ENCODE measurements at regions of chr3 and their contacts with region 1.

Region 1: GRCh38 chr3:16511681-16512434 is 1.6 kb downstream of the RFTN1 start:
- DNase-seq: peak; percentile 38 to 73
- ATAC-seq: peak; percentile 51 to 75 (median 56)
- H3K4me3 ChIP-seq: peak overlapping the region; percentile 57 to 96 (median 86)
- H3K27ac ChIP-seq: peak overlapping the region; percentile 86 to 96 (median 93)
- H3K4me1 ChIP-seq: peaks cover 8 to 90% (median 74%) of the 10 kb centered on the region in 9 donors
- H3K27me3 ChIP-seq: no peaks in the 10 kb centered on the region
- CTCF ChIP-seq: peak in 1 of 9 donors; percentile 15

Region 2: GRCh38 chr3:16290007-16290826 is 221.6 kb before region 1 on chr3:
- intact Hi-C with region 1: loop called in 8 of 10 experiments (anchors 1 to 10 kb)
- DNase-seq: peak in 1 of 2 donors; percentile 54
- ATAC-seq: peak in 4 of 8 donors; percentile 34 to 65 (median 44)
- H3K4me3 ChIP-seq: no peak overlapping the region
- H3K27ac ChIP-seq: peak overlapping the region in 7 of 10 donors; percentile 4 to 88 (median 73)
- H3K4me1 ChIP-seq: peaks cover 26 to 76% (median 60%) of the 10 kb centered on the region in 9 donors
- H3K27me3 ChIP-seq: no peaks in the 10 kb centered on the region
- CTCF ChIP-seq: peak; percentile 47 to 95 (median 85)

Region 3: GRCh38 chr3:16369885-16370284 is 142.0 kb before region 1 on chr3:
- intact Hi-C with region 1: loop called in 7 of 10 experiments (anchors 10 kb)
- DNase-seq: no peak
- ATAC-seq: no peak
- H3K4me3 ChIP-seq: no peak overlapping the region
- H3K27ac ChIP-seq: peak overlapping the region in 7 of 10 donors; percentile 22 to 83 (median 65)
- H3K4me1 ChIP-seq: peaks cover 28 to 89% (median 68%) of the 10 kb centered on the region in 9 donors
- H3K27me3 ChIP-seq: no peaks in the 10 kb centered on the region
- CTCF ChIP-seq: no peak

Region 4: DNA sequence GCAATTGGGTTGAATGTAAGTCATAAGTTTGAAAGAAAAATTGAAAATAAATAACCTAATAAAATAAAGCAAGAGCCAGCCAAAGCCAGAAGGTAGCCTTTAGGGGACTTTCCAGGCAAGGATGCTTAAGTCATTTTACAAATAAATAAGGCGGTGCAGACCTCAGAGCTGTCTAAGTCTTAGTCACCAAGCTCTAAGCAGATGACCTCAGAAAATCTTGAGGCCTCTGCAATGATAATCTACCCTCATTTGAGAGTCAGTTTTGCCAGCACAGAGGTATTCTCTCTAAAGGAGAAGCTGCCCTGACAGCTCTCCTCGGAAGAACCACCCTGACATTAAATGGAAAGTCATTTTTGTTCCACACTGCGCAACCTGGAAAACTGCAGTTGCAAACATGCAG is 132.9 kb before region 1 on chr3:
- intact Hi-C with region 1: loop called in 6 of 10 experiments (anchors 10 kb)
- DNase-seq: no peak
- ATAC-seq: no peak
- H3K4me3 ChIP-seq: no peak overlapping the region
- H3K27ac ChIP-seq: peak overlapping the region in 1 of 10 donors; percentile 32
- H3K4me1 ChIP-seq: peaks cover 25 to 64% (median 47%) of the 10 kb centered on the region in 9 donors
- H3K27me3 ChIP-seq: no peaks in the 10 kb centered on the region
- CTCF ChIP-seq: no peak

Region 5: GRCh38 chr3:16448639-16449070 is 63.2 kb before region 1 on chr3:
- intact Hi-C with region 1: loop called in 2 of 10 experiments (anchors 5 to 10 kb)
- DNase-seq: peak; percentile 44 to 67
- ATAC-seq: peak; percentile 64 to 90 (median 74)
- H3K4me3 ChIP-seq: no peak overlapping the region
- H3K27ac ChIP-seq: peak overlapping the region in 9 of 10 donors; percentile 0 to 73 (median 51)
- H3K4me1 ChIP-seq: peaks cover 3 to 60% (median 31%) of the 10 kb centered on the region in 9 donors
- H3K27me3 ChIP-seq: no peaks in the 10 kb centered on the region
- CTCF ChIP-seq: no peak

Region 6: DNA sequence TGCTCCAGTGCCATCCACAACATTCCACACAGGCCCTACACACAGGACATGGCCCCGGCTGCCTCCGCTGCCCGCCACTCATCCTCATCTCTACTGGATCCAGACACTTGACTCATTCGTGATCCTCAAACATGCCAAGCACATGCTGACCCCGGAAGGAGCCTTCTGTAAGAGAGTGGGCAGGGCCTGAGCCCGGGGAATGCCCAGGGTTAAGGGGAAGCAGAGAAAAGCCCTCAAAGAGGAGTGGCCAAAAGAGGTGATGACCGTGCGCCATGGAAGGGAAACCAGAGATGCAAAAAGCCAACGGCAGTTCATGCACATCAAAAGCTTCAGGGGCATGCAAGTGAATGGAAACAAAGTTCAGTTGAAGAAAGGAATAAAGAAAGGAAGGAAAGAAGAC is 44.5 kb before region 1 on chr3:
- intact Hi-C with region 1: loop called in 5 of 10 experiments (anchors 5 kb)
- DNase-seq: no peak
- ATAC-seq: peak in 1 of 8 donors; percentile 24
- H3K4me3 ChIP-seq: no peak overlapping the region
- H3K27ac ChIP-seq: peak overlapping the region in 4 of 10 donors; percentile 17 to 65 (median 62)
- H3K4me1 ChIP-seq: peaks cover 7 to 86% (median 48%) of the 10 kb centered on the region in 9 donors
- H3K27me3 ChIP-seq: no peaks in the 10 kb centered on the region
- CTCF ChIP-seq: no peak

Region 7: DNA sequence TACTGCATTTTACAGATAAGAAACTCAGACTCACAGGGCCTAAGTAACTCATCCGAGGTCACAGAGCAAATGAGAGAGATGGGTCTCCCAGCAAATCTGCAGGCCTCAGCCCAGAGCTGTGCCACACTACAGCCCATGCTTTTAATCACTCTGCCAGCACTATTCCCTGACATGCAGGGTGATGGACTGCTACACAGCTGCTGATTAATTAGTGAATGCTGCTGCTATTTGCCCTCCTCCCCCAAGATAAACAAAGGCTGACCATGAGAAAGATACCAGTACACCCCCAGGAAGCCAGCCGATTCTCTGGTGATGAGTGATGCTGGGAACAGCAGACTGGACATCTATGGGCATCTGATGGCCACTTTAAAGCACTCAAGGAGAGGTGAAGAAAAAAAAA is 37.6 kb before region 1 on chr3:
- intact Hi-C with region 1: loop called in 5 of 10 experiments (anchors 5 kb)
- DNase-seq: no peak
- ATAC-seq: no peak
- H3K4me3 ChIP-seq: no peak overlapping the region
- H3K27ac ChIP-seq: peak overlapping the region in 2 of 10 donors; percentile 3 to 31
- H3K4me1 ChIP-seq: peaks cover 0 to 89% (median 40%) of the 10 kb centered on the region in 9 donors
- H3K27me3 ChIP-seq: no peaks in the 10 kb centered on the region
- CTCF ChIP-seq: no peak

Region 8: DNA sequence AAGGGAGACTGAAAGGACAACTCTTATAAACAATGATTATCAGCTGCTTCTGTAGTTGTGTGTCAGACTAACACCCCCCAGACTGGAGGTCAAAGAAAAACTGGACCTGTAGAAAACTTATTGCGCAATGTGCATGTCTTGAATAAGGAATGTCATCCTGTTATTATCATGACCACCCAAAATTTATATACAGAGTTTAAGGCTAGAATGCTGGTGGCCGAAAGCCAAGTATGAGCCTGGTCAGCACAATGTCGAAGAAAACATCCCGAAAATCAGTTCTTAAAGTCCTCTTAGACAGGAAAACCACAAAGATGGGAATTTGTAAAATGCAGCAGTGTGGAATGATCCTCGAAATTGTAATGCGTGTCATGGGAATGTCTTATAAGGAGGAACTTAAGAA is 27.6 kb before region 1 on chr3:
- intact Hi-C with region 1: no loop called
- DNase-seq: no peak
- ATAC-seq: peak in 7 of 8 donors; percentile 26 to 47 (median 33)
- H3K4me3 ChIP-seq: no peak overlapping the region
- H3K27ac ChIP-seq: peak overlapping the region in 8 of 10 donors; percentile 11 to 80 (median 38)
- H3K4me1 ChIP-seq: peaks cover 8 to 69% (median 54%) of the 10 kb centered on the region in 9 donors
- H3K27me3 ChIP-seq: no peaks in the 10 kb centered on the region
- CTCF ChIP-seq: no peak

Measured in heart right ventricle (tissue), 16 donors.